WTC11 (cell line): ENCODE measurements at regions of chr2 and their contacts with region 1.

Region 1: GRCh38 chr2:101341901-101342624 is 33.6 kb upstream of the RNF149 start:
- DNase-seq: peak; percentile 86
- ATAC-seq: peak; percentile 66
- H3K4me3 Mint-ChIP-seq: no peak overlapping the region; the same call in 1 of the 2 replicates
- H3K27ac Mint-ChIP-seq: no peak overlapping the region
- H3K4me1 Mint-ChIP-seq: peaks cover 60% of the 10 kb centered on the region
- H3K27me3 Mint-ChIP-seq: peaks cover 18% of the 10 kb centered on the region
- CTCF ChIP-seq: peak; percentile 85

Region 2: GRCh38 chr2:101277113-101277512 is 65.0 kb before region 1 on chr2:
- CTCF ChIA-PET with region 1: interaction called, 10 read pairs
- POLR2A ChIA-PET with region 1: no interaction called
- DNase-seq: no peak
- ATAC-seq: 0 out of 2 replicates have a peak, but pooled peaks have one; percentile 16
- H3K4me3 Mint-ChIP-seq: no peak overlapping the region
- H3K27ac Mint-ChIP-seq: no peak overlapping the region
- H3K4me1 Mint-ChIP-seq: no peaks in the 10 kb centered on the region
- H3K27me3 Mint-ChIP-seq: no peaks in the 10 kb centered on the region
- CTCF ChIP-seq: no peak

Region 3: DNA sequence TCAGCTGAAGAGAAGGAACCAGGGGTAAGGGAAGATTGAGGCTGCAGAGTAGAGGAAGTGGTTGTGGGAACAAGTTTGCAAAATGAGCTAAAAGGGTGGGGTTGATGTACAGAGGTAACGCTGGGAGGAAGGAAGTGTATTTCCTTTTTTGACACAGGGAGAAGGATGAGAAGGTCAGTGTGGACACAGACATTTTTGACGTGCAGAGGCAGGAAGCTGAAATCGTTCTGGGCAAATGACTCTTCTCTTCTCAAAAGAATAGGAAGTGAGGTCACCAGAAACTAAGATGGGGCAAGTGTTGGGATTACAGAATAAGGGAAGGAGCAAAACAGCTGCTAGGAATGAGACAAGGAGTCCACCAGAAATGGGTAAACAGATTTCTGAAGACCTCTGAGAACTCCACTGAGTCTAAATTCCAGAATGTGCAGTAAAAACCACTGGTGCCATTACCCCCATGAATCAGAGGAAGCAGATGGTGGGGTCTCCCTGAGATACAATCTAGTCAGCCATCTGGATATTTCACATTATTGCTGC is 13.5 kb before region 1 on chr2:
- CTCF ChIA-PET with region 1: interaction called, 27 read pairs
- POLR2A ChIA-PET with region 1: no interaction called
- DNase-seq: no peak
- ATAC-seq: no peak
- H3K4me3 Mint-ChIP-seq: no peak overlapping the region
- H3K27ac Mint-ChIP-seq: no peak overlapping the region
- H3K4me1 Mint-ChIP-seq: peaks cover 3% of the 10 kb centered on the region
- H3K27me3 Mint-ChIP-seq: no peaks in the 10 kb centered on the region
- CTCF ChIP-seq: no peak

Region 4: DNA sequence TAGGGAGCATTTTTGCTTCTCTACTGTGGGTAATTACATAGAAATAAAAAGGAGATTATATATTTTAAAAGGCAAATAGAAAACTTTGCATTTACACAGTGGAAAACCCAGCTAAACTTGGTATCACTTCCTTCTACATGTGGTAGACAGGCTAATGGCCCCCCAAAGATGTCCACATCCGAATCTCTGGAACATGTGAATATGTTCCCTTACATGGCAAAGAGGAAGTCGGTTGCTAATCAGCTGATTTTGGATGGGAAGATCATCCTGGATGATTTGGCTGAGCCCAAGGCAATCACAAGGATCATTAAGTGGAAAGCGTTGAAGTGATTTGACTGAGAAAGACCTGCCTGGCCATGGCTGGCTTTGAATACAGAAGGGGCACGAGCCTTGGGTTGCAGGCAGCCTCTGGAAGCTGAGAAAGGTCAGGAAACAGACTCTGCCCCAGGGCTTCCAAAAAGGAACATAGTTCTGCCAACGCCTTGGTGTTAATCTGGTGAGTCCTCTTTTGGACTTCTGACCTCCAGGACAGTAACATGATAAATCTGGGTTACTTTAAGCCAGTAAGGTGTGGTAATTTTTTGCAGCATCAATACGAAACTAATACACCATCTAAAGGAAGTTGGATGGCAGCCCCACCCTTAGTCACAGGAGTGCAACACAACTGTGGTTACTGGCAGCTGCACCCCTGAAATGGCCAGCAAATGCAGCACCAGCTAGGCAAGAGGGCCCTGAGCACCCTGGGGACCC is 19.2 kb after region 1 on chr2:
- CTCF ChIA-PET with region 1: interaction called, 25 read pairs
- POLR2A ChIA-PET with region 1: no interaction called
- DNase-seq: no peak
- ATAC-seq: no peak; the same call in 1 of the 2 replicates
- H3K4me3 Mint-ChIP-seq: no peak overlapping the region
- H3K27ac Mint-ChIP-seq: no peak overlapping the region
- H3K4me1 Mint-ChIP-seq: peaks cover 32% of the 10 kb centered on the region
- H3K27me3 Mint-ChIP-seq: no peaks in the 10 kb centered on the region
- CTCF ChIP-seq: no peak

Region 5: GRCh38 chr2:101400048-101400447 is 58.0 kb after region 1 on chr2:
- CTCF ChIA-PET with region 1: interaction called, 13 read pairs
- POLR2A ChIA-PET with region 1: no interaction called
- DNase-seq: no peak
- ATAC-seq: peak; percentile 13; the same call in 1 of the 2 replicates
- H3K4me3 Mint-ChIP-seq: no peak overlapping the region
- H3K27ac Mint-ChIP-seq: no peak overlapping the region
- H3K4me1 Mint-ChIP-seq: peaks cover 23% of the 10 kb centered on the region
- H3K27me3 Mint-ChIP-seq: no peaks in the 10 kb centered on the region; the same call in 1 of the 2 replicates
- CTCF ChIP-seq: no peak

Region 6: DNA sequence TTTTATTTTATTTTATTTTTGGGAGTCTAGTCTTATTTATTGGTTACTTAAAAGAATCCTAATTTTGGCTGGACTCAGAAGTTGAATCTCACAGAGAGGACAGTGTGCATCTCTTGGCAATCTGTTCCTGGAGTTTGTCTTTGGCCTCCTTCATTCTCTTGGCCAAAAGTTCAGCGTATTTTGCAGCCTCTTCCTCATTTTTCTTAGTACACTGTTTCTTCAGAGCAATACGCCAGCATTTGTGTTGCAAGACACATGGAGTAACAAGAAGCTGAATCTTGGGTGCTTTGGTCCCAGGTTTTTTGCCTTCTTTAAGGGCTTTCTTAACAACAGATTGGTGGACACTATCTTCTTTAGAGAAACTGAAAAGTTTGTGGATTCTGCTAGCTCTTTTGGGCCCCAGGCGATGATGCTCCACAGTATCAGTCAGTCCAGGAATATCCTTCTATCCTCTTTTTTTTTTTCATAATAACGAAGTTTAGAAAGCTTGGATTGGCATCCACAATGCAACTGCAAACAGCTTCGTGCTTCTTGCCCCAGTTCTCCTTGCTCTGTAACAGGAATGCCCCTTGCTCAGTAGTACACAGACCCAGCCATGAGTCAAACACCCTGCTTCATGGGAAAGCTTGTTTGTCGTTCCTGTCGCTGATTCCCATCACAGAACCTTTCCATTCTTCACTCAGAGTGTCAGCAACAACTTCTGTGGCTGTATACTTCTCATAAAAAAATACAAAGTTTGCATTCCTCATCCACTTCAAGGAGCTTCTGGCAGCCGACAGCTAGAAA is 167.6 kb after region 1 on chr2:
- CTCF ChIA-PET with region 1: no interaction called
- POLR2A ChIA-PET with region 1: no interaction called
- DNase-seq: no peak
- ATAC-seq: no peak
- H3K4me3 Mint-ChIP-seq: no peak overlapping the region
- H3K27ac Mint-ChIP-seq: no peak overlapping the region
- H3K4me1 Mint-ChIP-seq: no peaks in the 10 kb centered on the region
- H3K27me3 Mint-ChIP-seq: peaks cover 6% of the 10 kb centered on the region; the same call in 1 of the 2 replicates
- CTCF ChIP-seq: no peak

Region 7: DNA sequence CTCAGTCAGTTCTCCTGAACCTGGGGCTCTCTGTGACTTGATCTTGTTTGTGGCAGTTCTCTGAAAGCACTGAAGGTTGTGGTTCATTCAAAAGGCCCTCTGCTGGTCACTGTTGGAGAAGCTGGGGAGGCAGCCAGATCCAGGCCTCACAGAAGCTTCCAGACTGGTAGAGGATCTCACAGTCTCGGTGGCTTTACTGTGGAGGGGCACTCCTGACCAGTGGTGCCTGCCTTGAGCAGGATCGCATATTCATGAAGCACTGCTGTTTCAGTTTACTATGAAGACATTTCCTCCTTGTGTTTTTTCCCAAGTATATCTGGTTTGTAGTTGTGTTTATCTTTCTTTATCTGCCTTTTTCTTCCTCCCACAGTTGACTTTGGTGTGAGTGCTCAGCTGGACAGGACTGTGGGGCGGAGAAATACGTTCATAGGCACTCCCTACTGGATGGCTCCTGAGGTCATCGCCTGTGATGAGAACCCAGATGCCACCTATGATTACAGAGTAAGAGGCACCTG is 489.3 kb after region 1 on chr2:
- CTCF ChIA-PET with region 1: interaction called, 11 read pairs
- POLR2A ChIA-PET with region 1: no interaction called
- DNase-seq: peak; percentile 79
- ATAC-seq: peak; percentile 98
- H3K4me3 Mint-ChIP-seq: no peak overlapping the region
- H3K27ac Mint-ChIP-seq: peak overlapping the region; percentile 75
- H3K4me1 Mint-ChIP-seq: peaks cover 15% of the 10 kb centered on the region
- H3K27me3 Mint-ChIP-seq: no peaks in the 10 kb centered on the region
- CTCF ChIP-seq: peak; percentile 48; the same call in 1 of the 2 replicates